Naive thymus-derived CD8-positive, alpha-beta T cell (primary cell): ENCODE measurements at regions of chr4 and their contacts with region 1.

Region 1: GRCh38 chr4:8198906-8199593 is at the start of gene SH3TC1:
- DNase-seq: peak; percentile 26 to 74 (median 48)
- ATAC-seq: peak; percentile 61 to 89
- H3K4me3 Mint-ChIP-seq: peak within 1 kb of the TSS; percentile 84 to 97 (median 94)
- H3K27ac Mint-ChIP-seq: peak within 1 kb of the TSS; percentile 77 to 97 (median 94)
- H3K4me1 Mint-ChIP-seq: peaks cover 25 to 57% (median 55%) of the 10 kb centered on the region in 4 donors
- H3K27me3 Mint-ChIP-seq: no peaks in the 10 kb centered on the region
- polyA plus RNA-seq, gene SH3TC1: 3.7 to 6.5 (median 5.1) TPM

Region 2: GRCh38 chr4:8158710-8159536 is 40.1 kb before region 1 on chr4 and contains the start of gene ABLIM2:
- POLR2A ChIA-PET with region 1: interaction called, 12 read pairs
- DNase-seq: peak; percentile 97 to 100 (median 99)
- ATAC-seq: peak; percentile 94 to 97
- H3K4me3 Mint-ChIP-seq: peak within 1 kb of the TSS; percentile 92 to 100 (median 98)
- H3K27ac Mint-ChIP-seq: peak within 1 kb of the TSS; percentile 83 to 99 (median 96)
- H3K4me1 Mint-ChIP-seq: peaks cover 10 to 27% (median 20%) of the 10 kb centered on the region in 4 donors
- H3K27me3 Mint-ChIP-seq: peaks cover 0 to 19% (median 4%) of the 10 kb centered on the region in 5 donors
- polyA plus RNA-seq, gene ABLIM2: 0.47 to 2.4 (median 0.57) TPM